Thyroid gland (tissue), 4 donors: ENCODE measurements at regions of chr5 and their contacts with region 1.

Region 1: GRCh38 chr5:66306105-66306843 is 162.2 kb downstream of the SREK1 start:
- DNase-seq: peak; percentile 44 to 58
- H3K4me3 ChIP-seq: no peak overlapping the region
- H3K27ac ChIP-seq: no peak overlapping the region
- H3K4me1 ChIP-seq: peaks cover 5 to 7% of the 10 kb centered on the region in 2 donors
- H3K27me3 ChIP-seq: no peaks in the 10 kb centered on the region
- CTCF ChIP-seq: peak; percentile 35 to 89 (median 68)
- POLR2A ChIP-seq: no peak

Region 2: DNA sequence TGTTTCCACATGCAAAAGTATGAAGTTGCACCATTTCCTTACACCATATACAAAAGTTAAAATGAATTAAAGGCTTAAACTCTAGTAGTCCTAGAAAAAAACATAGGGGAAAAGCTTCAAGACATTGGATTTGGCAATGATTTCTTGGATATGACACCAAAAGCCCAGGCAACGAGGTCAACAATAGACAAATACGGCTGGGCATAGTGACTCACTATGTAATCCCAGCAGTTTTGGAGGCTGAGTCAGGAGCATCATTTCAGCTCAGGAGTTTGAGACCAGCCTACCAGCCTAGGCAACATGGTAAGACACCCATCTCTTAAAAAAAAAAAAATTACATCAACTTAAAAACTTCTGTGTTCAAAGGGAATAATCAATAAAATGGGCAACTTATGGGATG is 193.1 kb before region 1 on chr5:
- intact Hi-C with region 1: no loop called
- DNase-seq: no peak
- H3K4me3 ChIP-seq: no peak overlapping the region
- H3K27ac ChIP-seq: no peak overlapping the region
- H3K4me1 ChIP-seq: no peaks in the 10 kb centered on the region
- H3K27me3 ChIP-seq: no peaks in the 10 kb centered on the region
- CTCF ChIP-seq: no peak
- POLR2A ChIP-seq: no peak

Region 3: GRCh38 chr5:66633795-66634194 is 327.5 kb after region 1 on chr5:
- intact Hi-C with region 1: no loop called
- DNase-seq: no peak
- H3K4me3 ChIP-seq: no peak overlapping the region
- H3K27ac ChIP-seq: no peak overlapping the region
- H3K4me1 ChIP-seq: no peaks in the 10 kb centered on the region
- H3K27me3 ChIP-seq: no peaks in the 10 kb centered on the region
- CTCF ChIP-seq: no peak
- POLR2A ChIP-seq: no peak

Region 4: DNA sequence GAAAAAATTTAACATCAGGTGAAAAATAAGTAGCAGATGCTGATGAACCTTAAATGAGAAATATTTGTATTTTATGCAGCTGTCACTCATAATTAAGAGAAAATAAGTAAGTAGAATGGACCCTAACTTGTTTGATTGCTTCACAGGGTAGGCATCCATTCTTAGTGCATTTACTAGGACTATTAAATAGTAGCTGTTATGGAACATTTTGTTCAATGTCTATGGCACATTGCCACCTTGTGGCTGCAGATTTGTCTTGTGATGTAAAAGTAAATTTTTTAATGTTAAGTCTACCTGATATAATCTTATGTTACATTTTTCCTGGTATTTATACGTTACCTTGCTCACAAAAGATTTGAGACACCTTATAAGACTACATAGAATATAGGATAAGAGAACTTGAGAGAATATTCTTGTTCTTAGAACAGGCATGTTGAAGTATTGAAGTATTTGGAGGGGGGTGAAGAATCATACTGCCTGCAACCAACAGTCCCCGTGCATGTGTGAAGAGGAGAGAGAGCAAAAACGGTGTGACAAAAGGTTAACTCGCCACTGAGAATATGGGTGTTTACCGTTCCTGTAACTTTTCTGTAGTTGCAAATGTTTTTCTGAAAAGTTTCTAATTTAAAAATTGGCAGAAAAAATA is 451.0 kb after region 1 on chr5:
- intact Hi-C with region 1: loop called (anchors 5 kb)
- DNase-seq: peak; percentile 56 to 62
- H3K4me3 ChIP-seq: no peak overlapping the region
- H3K27ac ChIP-seq: no peak overlapping the region
- H3K4me1 ChIP-seq: peaks cover 11 to 12% of the 10 kb centered on the region in 2 donors
- H3K27me3 ChIP-seq: no peaks in the 10 kb centered on the region
- CTCF ChIP-seq: peak in 4 of 6 experiments; percentile 35 to 61 (median 46)
- POLR2A ChIP-seq: no peak